HAP-1 (cell line): ENCODE measurements at regions of chr9 and their contacts with region 1.

Region 1: GRCh38 chr9:134449221-134449894 is 123.1 kb downstream of the RXRA start:
- DNase-seq: peak; percentile 60 to 80
- H3K4me3 ChIP-seq: no peak overlapping the region
- H3K4me1 ChIP-seq: no peaks in the 10 kb centered on the region
- H3K27me3 ChIP-seq: no peaks in the 10 kb centered on the region

Region 2: DNA sequence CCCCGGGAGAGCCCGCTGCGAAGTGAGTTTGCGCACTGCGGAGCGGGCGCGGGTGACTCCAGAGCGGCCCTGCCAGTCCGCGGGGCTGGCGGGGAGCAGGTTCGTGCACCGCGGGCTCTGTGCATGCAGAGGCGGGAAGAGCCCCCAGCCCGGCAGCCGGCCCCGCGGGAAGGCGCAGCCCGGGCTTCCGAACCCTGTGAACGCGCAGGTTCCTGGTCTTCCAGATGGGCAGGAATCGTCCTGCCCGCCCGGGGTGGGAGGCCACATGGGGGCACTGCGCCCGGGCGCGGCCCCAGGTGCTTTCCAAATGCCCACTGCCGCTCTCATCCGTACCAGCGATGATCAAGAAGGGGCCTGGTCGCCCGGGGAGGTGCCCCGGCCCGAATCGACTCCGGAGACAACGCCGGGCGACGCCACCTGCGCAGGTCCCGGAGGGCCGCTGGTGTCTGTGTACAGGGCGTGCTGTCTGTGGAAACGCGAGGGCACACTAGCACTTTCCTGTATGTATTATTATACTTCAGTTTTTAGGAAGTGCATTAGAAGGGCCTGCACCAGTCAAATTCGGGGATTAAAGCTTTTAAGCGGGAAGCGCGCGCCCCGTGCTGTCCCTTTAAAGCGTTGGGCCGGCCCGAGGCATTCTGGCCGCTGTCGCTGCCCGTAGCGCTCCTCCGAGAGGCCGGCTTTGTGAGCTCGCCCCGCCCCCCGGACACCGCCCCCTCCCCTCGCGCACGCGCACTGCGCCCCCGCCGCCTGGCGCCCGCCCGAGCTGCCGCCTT is 313.8 kb before region 1 on chr9 and contains the start of gene WDR5:
- in situ Hi-C with region 1: no loop called
- DNase-seq: peak; percentile 82 to 94
- H3K4me3 ChIP-seq: peak within 1 kb of the TSS; percentile 88
- H3K4me1 ChIP-seq: peaks cover 17% of the 10 kb centered on the region
- H3K27me3 ChIP-seq: no peaks in the 10 kb centered on the region

Region 3: GRCh38 chr9:134165357-134166310 is 283.7 kb before region 1 on chr9:
- in situ Hi-C with region 1: loop called (anchors 5 kb)
- DNase-seq: peak in 1 of 2 experiments; percentile 58
- H3K4me3 ChIP-seq: no peak overlapping the region
- H3K4me1 ChIP-seq: peaks cover 8% of the 10 kb centered on the region; the same call in 1 of the 2 replicates
- H3K27me3 ChIP-seq: no peaks in the 10 kb centered on the region

Region 4: GRCh38 chr9:134502809-134503211 is 53.5 kb after region 1 on chr9:
- in situ Hi-C with region 1: no loop called
- DNase-seq: no peak
- H3K4me3 ChIP-seq: no peak overlapping the region
- H3K4me1 ChIP-seq: no peaks in the 10 kb centered on the region
- H3K27me3 ChIP-seq: no peaks in the 10 kb centered on the region